ENCODE measurements at regions of chr5 and their contacts with region 1.

Region 1: DNA sequence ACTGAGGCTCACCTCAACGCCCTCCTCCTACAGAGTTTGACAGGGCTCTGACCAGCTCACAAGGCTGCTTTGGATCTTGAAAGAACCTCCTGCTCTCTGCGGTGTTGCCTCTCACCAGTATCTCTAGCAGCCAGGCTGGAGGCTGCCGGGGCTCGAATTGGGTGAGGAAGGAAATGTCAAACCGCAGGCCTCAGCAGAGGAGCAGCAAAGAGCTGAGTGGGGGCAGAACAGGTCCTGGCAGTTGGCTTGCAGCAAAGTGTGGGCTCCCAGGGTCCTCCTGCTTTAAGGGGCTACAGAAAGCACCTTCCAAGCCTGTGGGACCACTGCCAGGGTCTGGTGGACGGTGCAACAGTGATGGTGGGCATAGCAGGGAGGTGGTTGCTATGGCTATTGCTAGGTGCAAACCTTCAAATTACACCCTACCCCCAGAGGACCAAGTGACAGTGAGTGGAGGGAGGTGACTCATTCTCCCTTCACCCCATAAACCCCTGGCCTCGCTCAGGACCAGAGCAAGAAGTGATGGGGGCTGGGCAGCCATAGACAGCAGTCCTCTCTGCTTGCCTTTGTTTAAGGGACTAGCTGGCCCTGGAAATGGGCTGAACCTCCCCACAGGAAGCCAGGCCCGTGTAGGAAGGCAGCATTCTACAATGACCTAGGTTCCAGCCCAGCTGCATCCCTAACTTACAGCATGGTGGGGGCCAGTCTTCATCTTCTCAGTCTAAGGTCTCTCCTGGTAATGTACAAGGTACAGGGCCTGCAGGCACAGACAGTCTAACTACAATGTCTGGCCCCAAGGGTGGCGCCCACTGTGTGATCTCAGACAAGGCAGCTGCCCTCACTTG is 18.7 kb downstream of the LCP2 start:
- DNase-seq: peak; percentile 89

Region 2: DNA sequence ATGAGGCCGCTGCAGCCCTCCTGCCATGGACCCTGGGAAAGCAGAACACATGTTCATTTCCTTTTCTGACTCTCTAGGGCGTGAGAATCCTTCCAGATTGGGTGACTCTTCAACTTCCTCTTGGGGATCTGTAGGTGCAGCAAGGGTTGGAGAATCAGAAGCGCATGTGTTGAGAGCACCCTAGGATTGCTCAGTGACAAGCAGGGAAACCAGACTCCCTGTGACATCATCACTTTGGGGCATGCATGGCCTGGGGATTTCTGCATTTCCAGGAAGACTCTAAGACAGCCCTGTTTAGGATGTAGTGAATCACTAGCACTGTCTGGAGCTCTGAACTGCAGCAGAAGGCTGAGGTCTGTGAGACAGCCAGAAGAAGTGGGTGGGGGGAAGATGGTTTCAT is 33.8 kb after region 1 on chr5:
- intact Hi-C with region 1: no loop called
- DNase-seq: no peak

Region 3: DNA sequence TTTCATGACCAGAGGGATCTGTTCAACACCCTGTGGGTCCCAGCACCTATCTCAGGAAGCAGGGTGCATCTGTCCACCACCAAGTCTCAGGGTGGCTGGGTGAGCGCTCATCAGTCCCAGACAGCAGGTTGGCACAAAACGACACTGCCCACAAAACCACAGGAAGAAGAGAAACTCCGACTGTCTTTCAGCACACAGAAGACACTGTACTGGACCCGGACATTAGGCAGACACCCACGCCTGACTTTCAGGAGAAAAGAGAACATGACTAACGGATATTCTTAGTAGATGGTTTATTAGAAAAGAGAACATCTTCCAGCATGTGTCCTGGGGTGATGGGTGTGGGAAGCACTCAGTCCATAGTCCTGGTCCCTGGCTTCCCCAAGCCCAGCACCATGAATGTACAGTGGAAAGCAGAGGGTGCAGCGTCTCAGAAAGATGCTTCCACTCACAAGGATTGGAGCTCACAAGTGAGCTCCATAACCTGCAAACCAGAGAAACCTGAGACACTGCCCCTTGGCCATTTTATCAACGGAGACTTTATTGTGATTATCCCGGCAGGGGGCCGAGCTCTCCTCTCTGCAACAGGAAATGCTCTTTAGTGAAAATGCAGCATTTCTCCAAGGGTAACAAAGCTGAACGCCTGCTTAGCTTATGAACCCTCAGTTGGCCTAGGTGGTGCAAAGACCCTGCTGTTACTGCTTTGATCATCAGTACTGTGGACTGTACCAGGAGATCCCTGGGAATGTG is 54.5 kb after region 1 on chr5:
- intact Hi-C with region 1: loop called (anchors 5 kb)
- DNase-seq: peak; percentile 83

Measured in cardiac septum (tissue), 1 donor.